ENCODE measurements at regions of chr4 and their contacts with region 1.

Region 1: DNA sequence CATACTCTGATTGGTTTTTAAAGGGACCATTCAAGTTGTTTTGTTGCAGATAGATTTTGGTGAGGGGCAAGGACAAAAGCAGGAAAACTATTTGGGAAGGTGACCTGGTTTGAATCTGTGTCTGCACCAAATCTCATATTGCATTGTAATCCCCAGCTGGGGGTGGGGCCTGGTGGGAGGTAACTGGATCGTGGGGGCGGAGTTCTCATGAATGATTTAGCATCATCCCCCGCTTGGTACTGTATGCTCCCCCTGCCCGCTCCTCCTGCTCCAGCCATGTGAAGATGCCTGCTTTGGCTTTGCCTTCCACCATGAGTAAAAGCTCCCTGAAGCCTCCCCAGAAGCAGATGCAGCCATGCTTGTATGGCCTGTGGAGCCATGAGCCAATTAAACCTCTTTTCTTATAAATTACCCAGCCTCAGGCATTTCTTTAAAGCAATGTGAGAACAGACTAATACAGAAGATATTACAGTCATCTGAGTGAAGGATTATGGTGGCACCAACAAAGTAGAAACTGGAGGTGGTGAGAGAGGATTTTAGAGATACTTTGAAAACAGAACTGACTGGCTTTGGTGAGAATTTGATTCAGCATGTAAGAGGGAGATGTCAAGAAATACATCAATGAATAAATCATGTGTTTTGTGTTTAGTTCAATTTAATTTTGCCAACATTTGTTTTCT is 14.4 kb downstream of the IL21 start:
- DNase-seq: no peak
- H3K4me3 ChIP-seq: no peak overlapping the region
- H3K27ac ChIP-seq: no peak overlapping the region
- H3K4me1 ChIP-seq: no peaks in the 10 kb centered on the region
- H3K27me3 ChIP-seq: peaks cover 0 to 3% of the 10 kb centered on the region in 2 donors
- CTCF ChIP-seq: no peak

Region 2: GRCh38 chr4:122562449-122562848 is 44.1 kb before region 1 on chr4:
- intact Hi-C with region 1: no loop called
- DNase-seq: no peak
- H3K4me3 ChIP-seq: no peak overlapping the region
- H3K27ac ChIP-seq: no peak overlapping the region
- H3K4me1 ChIP-seq: no peaks in the 10 kb centered on the region
- H3K27me3 ChIP-seq: no peaks in the 10 kb centered on the region
- CTCF ChIP-seq: no peak

Region 3: DNA sequence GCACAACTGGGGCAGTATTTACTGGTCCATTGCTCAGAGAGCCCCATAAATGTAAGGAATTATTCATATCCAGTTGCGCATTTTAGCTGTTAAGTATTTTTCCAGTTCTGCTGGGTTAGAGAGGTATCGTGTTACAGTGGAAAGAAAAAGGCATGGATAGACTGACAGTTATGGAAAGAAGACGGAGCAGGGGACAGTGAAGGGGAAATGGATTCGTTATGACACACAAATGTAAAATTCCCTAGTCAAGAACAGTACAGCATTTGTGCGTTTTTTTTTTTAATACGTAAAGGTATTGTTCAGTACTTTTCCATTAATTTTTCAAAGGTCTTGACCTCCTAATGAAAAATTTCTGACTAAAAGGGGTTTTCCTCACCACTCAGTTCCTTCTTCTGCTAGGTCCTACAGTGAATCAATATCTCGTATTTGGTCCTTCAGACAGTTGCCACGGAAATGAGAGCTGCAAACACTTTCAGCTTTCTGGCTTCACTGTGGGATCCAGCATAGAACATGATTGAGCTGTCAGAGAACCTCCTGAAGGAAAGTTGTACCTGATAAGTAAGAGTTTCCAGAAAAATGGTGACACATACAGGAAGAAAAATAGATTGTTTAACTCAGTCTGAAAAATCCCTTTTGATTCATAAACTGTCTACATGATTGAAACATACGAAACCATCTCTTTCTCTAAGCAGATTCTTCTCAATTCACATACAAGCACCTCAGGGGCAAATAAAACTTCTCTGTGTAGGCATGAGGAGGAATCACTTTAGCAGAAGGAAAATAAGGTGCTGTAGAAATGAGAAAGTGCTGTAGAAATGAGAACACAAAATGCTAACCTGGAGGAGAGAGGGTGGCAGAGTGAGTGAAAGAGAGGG is 104.2 kb after region 1 on chr4:
- intact Hi-C with region 1: loop called (anchors 5 kb)
- DNase-seq: no peak
- H3K4me3 ChIP-seq: peak overlapping the region; percentile 15 to 30
- H3K27ac ChIP-seq: no peak overlapping the region
- H3K4me1 ChIP-seq: peaks cover 0 to 9% (median 1%) of the 10 kb centered on the region in 4 donors
- H3K27me3 ChIP-seq: no peaks in the 10 kb centered on the region
- CTCF ChIP-seq: no peak

Region 4: DNA sequence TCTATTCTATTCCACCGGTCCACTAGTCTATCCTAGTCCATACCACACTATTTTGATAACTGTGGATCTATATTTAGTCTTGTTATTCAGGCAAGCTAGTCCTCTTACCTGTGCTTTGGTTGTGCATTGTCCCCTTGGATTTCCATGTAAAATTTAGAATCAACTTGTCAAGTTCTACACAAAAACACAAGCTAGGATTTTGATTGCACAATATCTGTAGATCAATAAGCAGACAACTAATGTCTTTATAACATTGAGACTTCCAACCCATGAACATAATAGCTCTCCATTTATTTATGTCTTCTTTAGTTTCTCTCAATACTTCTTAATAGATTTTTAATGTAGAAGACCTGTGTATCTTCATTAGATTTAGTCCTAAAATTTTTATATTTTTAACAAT is 115.8 kb after region 1 on chr4:
- intact Hi-C with region 1: no loop called
- DNase-seq: no peak
- H3K4me3 ChIP-seq: no peak overlapping the region
- H3K27ac ChIP-seq: no peak overlapping the region
- H3K4me1 ChIP-seq: no peaks in the 10 kb centered on the region
- H3K27me3 ChIP-seq: no peaks in the 10 kb centered on the region
- CTCF ChIP-seq: no peak

Region 5: GRCh38 chr4:122732329-122733026 is 126.0 kb after region 1 on chr4 and contains the start of gene BBS12:
- intact Hi-C with region 1: no loop called
- DNase-seq: peak; percentile 99
- H3K4me3 ChIP-seq: peak within 1 kb of the TSS; percentile 63 to 76
- H3K27ac ChIP-seq: peak within 1 kb of the TSS; percentile 80 to 83
- H3K4me1 ChIP-seq: peaks cover 0 to 22% (median 4%) of the 10 kb centered on the region in 4 donors
- H3K27me3 ChIP-seq: no peaks in the 10 kb centered on the region
- CTCF ChIP-seq: no peak